Transverse colon (tissue), 4 donors: ENCODE measurements at regions of chr14 and their contacts with region 1.

Region 1: GRCh38 chr14:72516936-72517700 is 376.8 kb downstream of the DPF3 start:
- DNase-seq: peak; percentile 69
- H3K4me3 ChIP-seq: no peak overlapping the region
- H3K27ac ChIP-seq: no peak overlapping the region
- H3K4me1 ChIP-seq: no peaks in the 10 kb centered on the region
- H3K27me3 ChIP-seq: no peaks in the 10 kb centered on the region
- CTCF ChIP-seq: peak; percentile 86 to 91 (median 89)
- EP300 ChIP-seq: no peak
- POLR2A ChIP-seq: no peak

Region 2: GRCh38 chr14:72573725-72574417 is 56.8 kb after region 1 on chr14:
- in situ Hi-C with region 1: no loop called
- intact Hi-C with region 1: no loop called
- DNase-seq: no peak
- H3K4me3 ChIP-seq: no peak overlapping the region
- H3K27ac ChIP-seq: no peak overlapping the region
- H3K4me1 ChIP-seq: no peaks in the 10 kb centered on the region
- H3K27me3 ChIP-seq: no peaks in the 10 kb centered on the region
- CTCF ChIP-seq: no peak
- EP300 ChIP-seq: no peak
- POLR2A ChIP-seq: no peak

Region 3: DNA sequence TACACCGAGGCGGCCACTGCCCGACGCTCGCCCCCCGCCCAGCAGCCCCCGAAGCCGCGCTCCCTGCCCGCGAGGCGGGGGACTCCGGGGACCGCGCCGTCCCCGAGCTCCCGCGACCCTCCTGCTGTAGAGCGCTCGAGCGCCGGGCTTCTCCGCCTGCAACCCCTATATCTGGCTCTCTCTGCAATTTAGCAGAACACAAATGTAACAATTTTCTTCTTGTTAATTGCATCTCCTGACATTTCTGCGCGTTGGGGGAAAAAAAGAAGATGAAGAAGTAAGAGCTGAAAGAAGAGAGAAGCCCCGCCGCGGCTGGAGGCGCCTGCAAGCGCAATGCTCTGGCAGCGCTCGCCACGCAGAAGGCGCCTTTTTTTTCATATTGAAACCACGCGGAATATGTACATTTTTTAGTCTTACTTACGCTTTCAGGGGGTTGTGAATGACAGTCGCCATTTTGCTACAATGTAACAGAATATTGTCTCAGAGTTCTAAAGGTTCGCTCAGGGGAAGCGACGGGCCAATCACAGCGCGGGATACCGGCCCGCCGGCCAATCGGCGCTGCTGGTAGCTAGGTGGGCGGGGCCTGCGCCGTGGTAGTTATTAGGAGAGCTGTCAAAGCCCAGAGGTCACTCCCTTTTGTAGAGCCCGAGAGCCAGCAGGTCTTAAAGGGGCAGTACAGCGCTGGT is 376.7 kb after region 1 on chr14 and contains the start of gene DPF3:
- in situ Hi-C with region 1: loop called in 1 of 4 experiments (anchors 10 kb)
- intact Hi-C with region 1: no loop called
- DNase-seq: peak; percentile 98
- H3K4me3 ChIP-seq: peak within 1 kb of the TSS; percentile 64 to 94 (median 76)
- H3K27ac ChIP-seq: peak within 1 kb of the TSS; percentile 62 to 82 (median 79)
- H3K4me1 ChIP-seq: peaks cover 10 to 29% (median 22%) of the 10 kb centered on the region in 4 donors
- H3K27me3 ChIP-seq: peaks cover 42% of the 10 kb centered on the region
- CTCF ChIP-seq: no peak
- EP300 ChIP-seq: no peak
- POLR2A ChIP-seq: no peak
- total RNA-seq, gene DPF3: 7.1 to 23.5 (median 10.9) TPM

Region 4: DNA sequence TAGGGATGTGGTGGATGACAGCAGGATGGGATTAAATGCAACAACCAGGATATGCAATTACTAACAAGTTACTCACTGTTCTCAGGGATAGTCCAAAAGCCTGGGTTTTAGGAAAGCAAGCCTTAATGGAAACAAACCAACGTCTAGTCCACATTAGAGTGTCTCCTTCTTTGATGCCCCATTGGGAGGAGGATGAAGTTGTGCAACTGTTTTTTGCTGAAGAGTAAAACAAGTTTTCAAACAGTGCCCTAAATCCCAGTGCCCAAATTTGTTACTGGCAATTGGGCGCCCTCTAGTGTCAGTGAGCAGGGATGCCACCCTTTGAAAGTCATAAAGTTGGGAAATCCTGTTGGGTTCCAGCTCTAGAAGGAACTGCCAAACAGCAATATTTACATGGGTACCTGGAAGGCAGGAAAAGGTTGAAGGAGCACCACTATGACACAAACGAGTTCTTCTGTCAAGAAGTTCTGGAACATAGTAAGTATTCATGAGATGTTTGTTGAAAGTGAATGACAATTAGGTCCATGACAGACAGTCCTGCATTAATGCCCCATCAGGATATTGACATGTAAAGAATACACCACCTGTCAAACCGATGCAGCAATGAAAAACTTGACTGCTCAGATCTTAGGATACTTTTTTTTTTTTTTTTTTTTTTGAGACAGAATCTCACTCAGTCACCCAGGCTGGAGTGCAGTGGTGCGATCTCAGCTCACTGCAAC is 387.9 kb after region 1 on chr14:
- in situ Hi-C with region 1: loop called in 3 of 4 experiments (anchors 5 kb)
- intact Hi-C with region 1: loop called (anchors 2 kb)
- DNase-seq: peak; percentile 71
- H3K4me3 ChIP-seq: no peak overlapping the region
- H3K27ac ChIP-seq: no peak overlapping the region
- H3K4me1 ChIP-seq: peaks cover 0 to 14% (median 7%) of the 10 kb centered on the region in 4 donors
- H3K27me3 ChIP-seq: no peaks in the 10 kb centered on the region
- CTCF ChIP-seq: peak; percentile 90 to 96 (median 91)
- EP300 ChIP-seq: no peak
- POLR2A ChIP-seq: no peak

Region 5: GRCh38 chr14:72948481-72949138 is 431.5 kb after region 1 on chr14:
- in situ Hi-C with region 1: loop called in 2 of 4 experiments (anchors 10 kb)
- intact Hi-C with region 1: loop called (anchors 2 kb)
- DNase-seq: peak; percentile 68
- H3K4me3 ChIP-seq: no peak overlapping the region
- H3K27ac ChIP-seq: no peak overlapping the region
- H3K4me1 ChIP-seq: no peaks in the 10 kb centered on the region
- H3K27me3 ChIP-seq: no peaks in the 10 kb centered on the region
- CTCF ChIP-seq: peak; percentile 79 to 91 (median 85)
- EP300 ChIP-seq: no peak
- POLR2A ChIP-seq: no peak

Region 6: GRCh38 chr14:73136387-73137225 is 619.5 kb after region 1 on chr14 and contains the start of gene PSEN1:
- in situ Hi-C with region 1: no loop called
- intact Hi-C with region 1: no loop called
- DNase-seq: peak; percentile 98
- H3K4me3 ChIP-seq: peak within 1 kb of the TSS; percentile 74 to 95 (median 85)
- H3K27ac ChIP-seq: peak within 1 kb of the TSS; percentile 97 to 100 (median 98)
- H3K4me1 ChIP-seq: peaks cover 5 to 24% (median 14%) of the 10 kb centered on the region in 4 donors
- H3K27me3 ChIP-seq: no peaks in the 10 kb centered on the region
- CTCF ChIP-seq: no peak
- EP300 ChIP-seq: no peak
- POLR2A ChIP-seq: peak; percentile 95
- total RNA-seq, gene PSEN1: 101 to 221 (median 135) TPM